Activated CD4-positive, alpha-beta T cell treated with anti-CD3 and anti-CD28 coated beads for 36 hours (primary cell): ENCODE measurements at regions of chr16 and their contacts with region 1.

Region 1: GRCh38 chr16:70561623-70562022 is 38.0 kb downstream of the SF3B3 start:
- DNase-seq: no peak
- ATAC-seq: no peak
- H3K4me3 Mint-ChIP-seq: no peak overlapping the region
- H3K27ac Mint-ChIP-seq: no peak overlapping the region
- H3K4me1 Mint-ChIP-seq: no peaks in the 10 kb centered on the region
- H3K27me3 Mint-ChIP-seq: no peaks in the 10 kb centered on the region

Region 2: GRCh38 chr16:70276392-70276791 is 285.2 kb before region 1 on chr16:
- CTCF ChIA-PET with region 1: no interaction called
- POLR2A ChIA-PET with region 1: no interaction called
- intact Hi-C with region 1: loop called in 1 of 2 experiments (anchors 5 kb)
- DNase-seq: no peak
- ATAC-seq: no peak
- H3K4me3 Mint-ChIP-seq: no peak overlapping the region
- H3K27ac Mint-ChIP-seq: no peak overlapping the region
- H3K4me1 Mint-ChIP-seq: no peaks in the 10 kb centered on the region
- H3K27me3 Mint-ChIP-seq: no peaks in the 10 kb centered on the region

Region 3: DNA sequence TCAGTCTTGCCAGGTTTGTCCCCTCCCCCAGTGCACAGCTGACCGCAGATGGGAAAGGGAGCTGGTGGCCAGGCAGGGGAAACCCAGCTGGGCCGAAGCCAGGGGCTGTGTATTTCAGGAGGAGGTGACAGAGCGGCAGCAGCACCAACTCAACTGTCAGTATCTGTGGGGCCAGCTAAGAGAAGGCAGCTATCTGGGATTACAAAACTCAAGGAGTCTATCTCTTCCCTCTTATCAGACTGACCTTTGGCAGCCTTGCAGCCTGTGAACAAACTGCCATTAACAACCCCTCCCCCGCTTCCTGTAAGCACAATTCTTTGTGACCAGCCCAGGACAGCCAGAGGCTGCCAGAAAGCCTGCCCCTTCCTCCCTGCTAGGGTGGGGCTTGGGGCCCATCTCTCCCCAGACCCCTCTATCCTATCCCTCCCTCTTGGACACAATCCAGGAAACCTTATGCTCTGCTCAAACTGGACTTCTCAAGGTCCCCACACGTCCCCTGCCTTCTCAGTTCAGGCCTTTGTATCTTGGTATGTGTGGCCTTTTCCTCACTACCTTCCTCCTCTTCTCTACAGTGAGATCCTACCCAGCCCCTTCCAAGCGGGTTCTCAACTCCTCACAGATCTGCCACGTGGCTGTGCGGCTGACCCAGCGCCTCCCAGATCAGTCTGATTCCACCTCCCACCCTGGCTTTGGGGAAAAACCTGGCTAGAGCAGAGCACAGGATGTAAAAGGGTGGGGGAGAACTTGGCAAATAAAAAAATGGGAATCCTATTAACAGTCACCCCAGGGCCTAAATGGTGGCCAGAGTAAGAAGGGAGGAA is 133.2 kb before region 1 on chr16:
- CTCF ChIA-PET with region 1: no interaction called
- POLR2A ChIA-PET with region 1: no interaction called
- intact Hi-C with region 1: no loop called
- DNase-seq: peak; percentile 85
- ATAC-seq: peak; percentile 63
- H3K4me3 Mint-ChIP-seq: no peak overlapping the region
- H3K27ac Mint-ChIP-seq: peak overlapping the region; percentile 90
- H3K4me1 Mint-ChIP-seq: peaks cover 57% of the 10 kb centered on the region
- H3K27me3 Mint-ChIP-seq: no peaks in the 10 kb centered on the region

Region 4: DNA sequence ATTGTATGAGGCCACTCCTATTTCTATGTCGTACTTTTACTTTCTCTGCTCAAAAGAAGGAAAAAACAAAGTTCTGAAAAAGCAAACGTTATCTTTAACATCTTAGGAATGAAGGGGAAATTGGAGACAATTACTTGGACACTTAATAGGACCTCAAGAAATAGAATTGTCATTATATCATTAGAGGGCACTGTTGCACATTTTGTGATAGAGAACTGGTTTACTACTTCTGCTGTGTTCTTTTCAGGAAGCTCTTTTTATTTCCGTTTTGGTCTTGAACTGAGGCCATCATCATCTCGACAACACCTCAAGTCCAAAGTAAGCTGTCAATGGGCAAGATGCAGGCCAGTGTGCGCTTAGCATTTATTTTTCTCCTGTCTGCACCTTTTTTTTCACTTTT is 52.9 kb before region 1 on chr16:
- CTCF ChIA-PET with region 1: no interaction called
- POLR2A ChIA-PET with region 1: no interaction called
- intact Hi-C with region 1: no loop called
- DNase-seq: no peak
- ATAC-seq: no peak
- H3K4me3 Mint-ChIP-seq: no peak overlapping the region
- H3K27ac Mint-ChIP-seq: peak overlapping the region; percentile 20
- H3K4me1 Mint-ChIP-seq: peaks cover 8% of the 10 kb centered on the region
- H3K27me3 Mint-ChIP-seq: no peaks in the 10 kb centered on the region